ENCODE measurements at regions of chr20 and their contacts with region 1.

Region 1: DNA sequence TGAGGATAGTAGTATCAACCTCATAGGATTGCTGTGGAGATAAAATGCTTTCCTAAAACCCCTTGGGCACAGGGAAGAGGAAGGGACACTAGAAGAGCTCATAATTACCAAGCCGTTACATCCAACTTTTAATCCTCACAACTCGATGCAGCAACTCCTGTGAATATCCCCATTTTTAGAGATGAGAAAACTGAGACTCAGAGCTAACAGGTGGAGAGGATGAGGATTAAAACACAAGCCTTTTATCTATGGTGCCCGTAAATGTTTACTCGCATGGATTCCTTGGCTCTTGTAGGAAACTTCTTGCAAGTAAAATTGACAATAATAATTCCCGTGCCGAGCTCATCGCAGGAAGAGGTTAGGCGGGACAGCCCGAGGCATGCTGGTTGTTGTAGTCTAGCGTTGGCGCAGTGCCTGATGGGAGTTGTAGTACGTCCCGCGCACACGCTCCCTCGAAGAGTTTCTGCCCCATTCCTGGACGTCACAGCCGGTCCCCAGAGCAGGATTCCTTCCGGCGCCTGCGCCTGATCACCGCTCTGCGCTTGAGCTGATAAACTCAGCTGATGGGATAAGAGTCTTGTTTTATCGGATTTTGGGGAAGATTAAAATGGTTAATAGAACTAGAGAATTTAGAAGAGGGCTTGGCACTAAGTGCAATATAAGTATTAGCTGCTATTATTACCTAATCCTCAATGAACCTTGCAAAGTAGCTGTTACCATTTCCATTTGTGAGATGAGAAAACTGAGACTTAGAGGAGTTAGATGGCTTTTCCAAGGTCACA is 2.8 kb upstream of the UBE2V1 start:
- DNase-seq: peak; percentile 93
- ATAC-seq: peak; percentile 75
- H3K4me3 Mint-ChIP-seq: peak overlapping the region; percentile 77
- H3K27ac Mint-ChIP-seq: peak overlapping the region; percentile 89
- H3K4me1 Mint-ChIP-seq: peaks cover 53% of the 10 kb centered on the region
- H3K27me3 Mint-ChIP-seq: no peaks in the 10 kb centered on the region

Region 2: DNA sequence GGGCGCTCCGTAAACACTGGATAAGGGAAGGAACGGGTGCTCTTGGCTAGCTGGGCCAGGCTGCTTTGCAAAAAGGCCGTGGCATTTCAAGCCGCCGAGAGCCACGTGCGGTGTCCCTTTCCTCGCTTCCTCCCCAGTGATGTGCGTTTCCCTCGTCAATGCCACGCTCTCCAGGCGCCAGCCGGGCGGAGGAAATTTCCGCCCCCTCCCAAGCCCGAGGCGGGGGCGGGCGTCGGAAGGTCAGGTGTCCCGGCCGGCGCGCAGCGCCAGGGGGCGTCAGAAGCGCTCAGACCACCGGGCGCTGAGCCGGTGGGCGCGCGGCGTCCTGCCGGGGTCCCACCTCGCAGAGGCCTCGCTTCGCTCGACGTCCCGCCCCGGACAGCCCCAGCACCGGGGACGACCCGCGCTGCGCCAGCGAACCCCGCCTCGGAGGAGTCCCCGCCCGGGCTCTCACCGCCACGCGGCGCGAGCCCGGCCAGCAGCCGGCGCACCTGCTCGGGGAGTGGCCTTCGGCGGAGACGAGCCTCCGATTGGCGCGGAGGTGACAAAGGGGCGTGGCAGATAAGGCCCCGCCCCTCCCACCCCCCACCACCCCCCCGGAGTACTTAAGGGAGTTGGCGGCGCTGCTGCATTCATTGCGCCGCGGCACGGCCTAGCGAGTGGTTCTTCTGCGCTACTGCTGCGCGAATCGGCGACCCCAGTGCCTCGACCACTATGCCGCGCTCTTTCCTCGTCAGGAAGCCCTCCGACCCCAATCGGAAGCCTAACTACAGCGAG is 133.2 kb before region 1 on chr20 and contains the start of gene SNAI1:
- CTCF ChIA-PET with region 1: interaction called, 15 read pairs
- POLR2A ChIA-PET with region 1: no interaction called
- DNase-seq: peak; percentile 87
- ATAC-seq: peak; percentile 93
- H3K4me3 Mint-ChIP-seq: peak within 1 kb of the TSS; percentile 60
- H3K27ac Mint-ChIP-seq: peak within 1 kb of the TSS; percentile 25
- H3K4me1 Mint-ChIP-seq: peaks cover 31% of the 10 kb centered on the region
- H3K27me3 Mint-ChIP-seq: peaks cover 20% of the 10 kb centered on the region
- total RNA-seq, gene SNAI1: 0.37 to 0.47 TPM

Region 3: DNA sequence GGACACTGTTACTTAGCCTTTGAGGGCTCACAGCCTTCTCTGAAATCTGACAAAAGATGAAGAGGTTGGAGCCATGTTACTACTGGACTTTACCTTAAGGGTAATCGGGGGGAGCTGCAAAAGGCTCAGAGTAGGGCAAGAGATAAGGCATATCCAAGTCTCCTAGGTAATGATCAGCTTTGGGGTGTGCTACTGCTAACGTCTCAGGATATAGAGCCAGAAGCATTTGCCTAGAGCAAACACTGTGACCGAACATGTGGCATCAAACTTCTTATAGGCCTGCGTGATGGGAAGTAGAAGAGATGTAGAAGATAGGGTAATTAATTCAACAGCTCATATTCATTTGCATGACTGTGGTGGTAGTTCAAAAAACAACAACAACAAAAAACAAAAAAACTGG is 13.9 kb before region 1 on chr20:
- CTCF ChIA-PET with region 1: interaction called, 11 read pairs
- POLR2A ChIA-PET with region 1: interaction called, 3 read pairs
- DNase-seq: no peak
- ATAC-seq: no peak
- H3K4me3 Mint-ChIP-seq: no peak overlapping the region
- H3K27ac Mint-ChIP-seq: peak overlapping the region; percentile 1
- H3K4me1 Mint-ChIP-seq: peaks cover 28% of the 10 kb centered on the region
- H3K27me3 Mint-ChIP-seq: no peaks in the 10 kb centered on the region

Region 4: DNA sequence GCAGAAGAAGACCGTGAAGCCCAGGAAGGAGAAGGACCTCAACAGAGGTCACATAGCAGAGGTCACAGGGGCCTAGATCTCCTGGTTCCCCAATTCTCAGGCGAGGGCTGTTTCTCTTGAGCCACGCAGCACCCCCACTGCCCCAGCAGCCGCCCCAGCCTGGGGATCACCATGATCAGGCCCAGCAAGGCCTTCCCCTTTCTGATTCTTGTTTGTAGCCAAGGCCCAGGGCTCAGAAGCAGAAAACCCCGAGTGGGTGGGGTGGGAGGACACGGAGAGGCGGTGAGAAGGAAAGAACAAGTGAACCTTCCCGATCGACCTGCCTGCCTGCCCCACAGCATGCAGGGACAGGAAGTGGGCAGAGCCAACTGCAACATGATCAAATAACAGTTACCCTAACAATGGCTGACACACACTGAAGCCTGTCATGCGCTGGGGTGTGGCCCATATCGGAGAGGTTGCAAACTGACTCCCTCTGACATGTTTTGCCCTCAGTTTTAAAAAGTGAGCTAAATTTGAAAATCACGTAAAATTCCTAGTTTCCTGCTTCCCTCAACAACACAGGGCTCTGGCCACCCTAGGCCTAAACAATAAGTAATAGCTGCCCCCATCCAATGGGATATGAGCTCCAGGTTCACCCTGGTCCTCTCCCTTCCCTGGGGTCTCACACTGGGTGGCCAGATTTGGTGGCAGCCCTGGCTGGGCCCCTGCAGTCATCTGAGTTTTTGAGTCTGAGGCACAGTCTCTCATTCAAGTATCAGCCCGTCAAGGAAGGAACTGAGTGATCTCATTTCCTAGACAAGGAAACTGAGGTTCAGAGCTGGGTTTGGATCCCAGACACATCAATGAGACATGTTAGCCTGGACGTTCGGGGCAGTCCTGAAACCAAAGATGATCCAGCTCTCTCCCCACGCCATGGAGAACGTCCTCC is 31.2 kb after region 1 on chr20:
- CTCF ChIA-PET with region 1: interaction called, 56 read pairs
- POLR2A ChIA-PET with region 1: interaction called, 22 read pairs
- DNase-seq: peak; percentile 86
- ATAC-seq: peak; percentile 99
- H3K4me3 Mint-ChIP-seq: peak overlapping the region; percentile 78
- H3K27ac Mint-ChIP-seq: peak overlapping the region; percentile 98
- H3K4me1 Mint-ChIP-seq: peaks cover 68% of the 10 kb centered on the region
- H3K27me3 Mint-ChIP-seq: no peaks in the 10 kb centered on the region

Region 5: GRCh38 chr20:50165684-50166554 is 50.1 kb after region 1 on chr20:
- CTCF ChIA-PET with region 1: interaction called, 128 read pairs
- POLR2A ChIA-PET with region 1: interaction called, 4 read pairs
- DNase-seq: peak; percentile 79
- ATAC-seq: peak; percentile 95
- H3K4me3 Mint-ChIP-seq: peak overlapping the region; percentile 69
- H3K27ac Mint-ChIP-seq: peak overlapping the region; percentile 80
- H3K4me1 Mint-ChIP-seq: peaks cover 14% of the 10 kb centered on the region
- H3K27me3 Mint-ChIP-seq: peaks cover 2% of the 10 kb centered on the region

Measured in activated CD8-positive, alpha-beta T cell treated with anti-CD3 and anti-CD28 coated beads, Interleukin-2, amount 10 ng/mL, durations not matched to agents 7 days and 5 days (primary cell).